CD4-positive, alpha-beta T cell (primary cell): ENCODE measurements at regions of chr14 and their contacts with region 1.

Region 1: GRCh38 chr14:74762917-74763802 is at the start of gene YLPM1:
- DNase-seq: peak; percentile 85 to 98 (median 90)
- ATAC-seq: peak; percentile 89
- H3K4me3 ChIP-seq: peak within 1 kb of the TSS; percentile 84
- H3K4me3 Mint-ChIP-seq: peak within 1 kb of the TSS; percentile 88
- H3K27ac ChIP-seq: peak within 1 kb of the TSS; percentile 91 to 96
- H3K27ac Mint-ChIP-seq: peak within 1 kb of the TSS; percentile 85
- H3K4me1 ChIP-seq: peaks cover 37% of the 10 kb centered on the region
- H3K4me1 Mint-ChIP-seq: peaks cover 50% of the 10 kb centered on the region
- H3K27me3 ChIP-seq: no peaks in the 10 kb centered on the region
- H3K27me3 Mint-ChIP-seq: no peaks in the 10 kb centered on the region
- CTCF ChIP-seq: peak; percentile 54
- total RNA-seq, gene YLPM1: 87.2 to 88.6 TPM

Region 2: DNA sequence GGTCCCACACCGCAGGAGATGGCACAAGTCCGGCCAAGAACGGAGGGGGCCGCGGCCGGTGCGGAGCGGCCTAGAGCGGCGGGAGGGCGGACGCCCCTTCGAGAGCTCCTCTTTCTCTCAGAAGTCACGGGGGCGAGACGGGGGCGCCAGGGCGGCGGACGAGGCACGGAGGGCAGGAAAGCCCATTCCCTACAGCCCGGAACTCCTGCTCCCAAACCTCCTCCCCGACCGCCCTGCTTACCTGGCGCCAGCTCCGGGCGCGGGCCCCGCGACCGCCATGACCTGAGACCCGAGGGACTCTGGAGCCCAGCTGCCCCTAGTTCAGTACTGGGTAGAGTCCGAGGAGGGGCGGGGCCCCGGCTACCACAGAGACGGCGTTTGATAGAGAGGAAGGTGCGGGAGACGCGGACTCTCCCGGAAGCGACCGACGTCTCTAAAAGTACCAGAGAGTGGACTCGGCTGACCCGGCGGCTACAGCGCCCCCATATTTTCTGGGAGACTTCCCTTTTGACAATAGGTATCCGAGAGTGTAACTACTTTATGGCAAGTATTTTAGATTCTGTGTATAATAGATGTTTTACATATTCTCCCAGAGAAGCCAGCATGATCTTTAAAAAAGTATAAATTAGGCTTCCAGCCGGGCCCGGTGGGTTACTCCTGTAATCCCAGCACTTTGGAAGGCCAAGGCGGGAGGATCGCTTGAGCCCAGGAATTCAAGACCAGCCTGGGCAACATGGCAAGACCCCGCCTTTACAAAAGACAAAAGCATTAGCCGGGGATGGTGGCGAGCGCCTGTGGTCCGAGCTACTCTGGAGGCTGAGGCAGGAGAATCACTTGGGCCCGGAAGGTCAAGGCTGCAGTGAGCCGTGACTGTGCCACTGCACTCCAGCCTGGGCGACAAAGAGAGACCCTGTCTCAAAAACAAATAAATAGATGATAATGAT is 460.3 kb before region 1 on chr14 and contains the start of gene ABCD4:
- CTCF ChIA-PET with region 1: no interaction called
- POLR2A ChIA-PET with region 1: no interaction called
- intact Hi-C with region 1: loop called in 1 of 2 experiments (anchors 5 kb)
- DNase-seq: peak; percentile 68 to 91 (median 81)
- ATAC-seq: peak; percentile 70
- H3K4me3 ChIP-seq: peak within 1 kb of the TSS; percentile 96
- H3K4me3 Mint-ChIP-seq: peak within 1 kb of the TSS; percentile 97
- H3K27ac ChIP-seq: peak within 1 kb of the TSS; percentile 75 to 86
- H3K27ac Mint-ChIP-seq: peak within 1 kb of the TSS; percentile 87
- H3K4me1 ChIP-seq: peaks cover 33% of the 10 kb centered on the region
- H3K4me1 Mint-ChIP-seq: peaks cover 27% of the 10 kb centered on the region
- H3K27me3 ChIP-seq: no peaks in the 10 kb centered on the region
- H3K27me3 Mint-ChIP-seq: no peaks in the 10 kb centered on the region
- CTCF ChIP-seq: peak; percentile 53
- total RNA-seq, gene ABCD4: 59.6 to 63.0 TPM

Region 3: DNA sequence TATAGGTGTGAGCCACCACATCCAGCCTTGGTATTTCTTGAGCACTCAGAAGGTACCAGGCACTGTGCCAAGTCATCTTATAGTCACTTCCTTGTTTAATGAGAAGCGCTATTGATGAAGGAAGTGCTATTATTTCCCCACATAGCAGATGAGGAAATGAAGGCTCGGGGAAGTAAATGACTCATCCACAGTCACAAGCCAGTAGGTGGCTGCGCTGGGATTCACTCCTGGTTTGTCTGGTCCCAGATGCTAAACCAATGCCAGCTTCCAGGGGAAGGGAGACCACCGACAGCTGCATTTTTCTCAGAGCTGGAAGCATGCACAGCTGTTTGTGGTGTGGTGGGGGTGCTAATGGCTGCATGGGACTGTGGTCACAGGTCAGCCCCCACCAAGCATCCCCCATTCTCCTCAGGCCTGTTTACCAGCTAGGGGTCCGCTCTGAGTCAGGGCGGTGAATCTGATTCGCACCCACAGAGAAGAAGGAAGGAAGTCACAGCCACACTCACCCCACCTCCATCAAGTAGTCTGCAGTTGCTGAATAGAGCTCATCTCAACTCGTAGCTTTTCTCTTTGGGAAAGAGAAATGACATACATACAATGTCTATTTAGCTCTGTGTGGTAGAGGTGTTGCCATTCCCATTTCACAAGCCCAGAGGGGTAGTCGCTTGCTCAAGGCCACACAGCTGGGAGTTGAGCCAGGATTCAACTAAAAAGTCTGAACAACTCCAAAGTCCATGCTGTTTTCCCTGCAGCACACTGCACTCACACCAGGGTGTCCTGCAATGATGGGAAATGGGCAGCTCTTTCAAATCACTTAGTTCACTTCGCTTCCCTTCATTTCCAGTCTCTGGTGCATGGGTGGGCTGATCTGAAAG is 144.8 kb before region 1 on chr14:
- CTCF ChIA-PET with region 1: interaction called, 12 read pairs
- POLR2A ChIA-PET with region 1: interaction called, 19 read pairs
- intact Hi-C with region 1: no loop called
- DNase-seq: peak; percentile 24 to 89 (median 54)
- ATAC-seq: peak; percentile 82
- H3K4me3 ChIP-seq: peak overlapping the region; percentile 43
- H3K4me3 Mint-ChIP-seq: peak overlapping the region; percentile 78
- H3K27ac ChIP-seq: peak overlapping the region; percentile 62 to 76
- H3K27ac Mint-ChIP-seq: peak overlapping the region; percentile 95
- H3K4me1 ChIP-seq: peaks cover 62% of the 10 kb centered on the region
- H3K4me1 Mint-ChIP-seq: peaks cover 48% of the 10 kb centered on the region
- H3K27me3 ChIP-seq: no peaks in the 10 kb centered on the region
- H3K27me3 Mint-ChIP-seq: peaks cover 7% of the 10 kb centered on the region
- CTCF ChIP-seq: no peak

Region 4: DNA sequence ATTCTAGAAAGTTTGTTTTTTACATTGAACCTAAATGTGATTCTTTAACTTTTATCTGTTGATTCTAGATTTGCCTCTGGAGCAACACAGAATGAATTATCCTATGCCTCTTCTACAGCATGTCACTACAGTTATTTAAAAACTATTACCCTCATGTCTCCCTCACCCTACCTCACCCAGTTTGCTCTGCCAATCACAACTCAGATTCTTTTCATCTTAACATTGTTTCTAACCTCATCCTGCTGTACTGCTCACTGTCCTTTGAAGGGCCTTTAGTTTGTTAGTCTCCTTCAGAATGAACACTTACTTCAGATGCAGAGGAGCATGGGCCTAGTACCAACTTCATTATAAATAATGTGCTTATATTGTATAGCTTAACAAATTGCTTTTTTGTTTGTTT is 21.5 kb after region 1 on chr14:
- CTCF ChIA-PET with region 1: interaction called, 6 read pairs
- POLR2A ChIA-PET with region 1: interaction called, 17 read pairs
- intact Hi-C with region 1: no loop called
- DNase-seq: peak in 2 of 14 experiments; percentile 22 to 28
- ATAC-seq: peak; percentile 93
- H3K4me3 ChIP-seq: no peak overlapping the region
- H3K4me3 Mint-ChIP-seq: no peak overlapping the region
- H3K27ac ChIP-seq: no peak overlapping the region
- H3K27ac Mint-ChIP-seq: peak overlapping the region; percentile 21
- H3K4me1 ChIP-seq: peaks cover 3% of the 10 kb centered on the region
- H3K4me1 Mint-ChIP-seq: peaks cover 31% of the 10 kb centered on the region
- H3K27me3 ChIP-seq: no peaks in the 10 kb centered on the region
- H3K27me3 Mint-ChIP-seq: no peaks in the 10 kb centered on the region
- CTCF ChIP-seq: no peak

Region 5: GRCh38 chr14:74838166-74838565 is 75.0 kb after region 1 on chr14:
- CTCF ChIA-PET with region 1: no interaction called
- POLR2A ChIA-PET with region 1: interaction called, 16 read pairs
- intact Hi-C with region 1: loop called in 1 of 2 experiments (anchors 10 kb)
- DNase-seq: peak in 3 of 14 experiments; percentile 57 to 79 (median 59)
- ATAC-seq: peak; percentile 76
- H3K4me3 ChIP-seq: peak overlapping the region; percentile 8
- H3K4me3 Mint-ChIP-seq: peak overlapping the region; percentile 86
- H3K27ac ChIP-seq: peak overlapping the region; percentile 67 to 88
- H3K27ac Mint-ChIP-seq: peak overlapping the region; percentile 97
- H3K4me1 ChIP-seq: peaks cover 30% of the 10 kb centered on the region
- H3K4me1 Mint-ChIP-seq: peaks cover 87% of the 10 kb centered on the region
- H3K27me3 ChIP-seq: no peaks in the 10 kb centered on the region
- H3K27me3 Mint-ChIP-seq: no peaks in the 10 kb centered on the region
- CTCF ChIP-seq: no peak

Region 6: DNA sequence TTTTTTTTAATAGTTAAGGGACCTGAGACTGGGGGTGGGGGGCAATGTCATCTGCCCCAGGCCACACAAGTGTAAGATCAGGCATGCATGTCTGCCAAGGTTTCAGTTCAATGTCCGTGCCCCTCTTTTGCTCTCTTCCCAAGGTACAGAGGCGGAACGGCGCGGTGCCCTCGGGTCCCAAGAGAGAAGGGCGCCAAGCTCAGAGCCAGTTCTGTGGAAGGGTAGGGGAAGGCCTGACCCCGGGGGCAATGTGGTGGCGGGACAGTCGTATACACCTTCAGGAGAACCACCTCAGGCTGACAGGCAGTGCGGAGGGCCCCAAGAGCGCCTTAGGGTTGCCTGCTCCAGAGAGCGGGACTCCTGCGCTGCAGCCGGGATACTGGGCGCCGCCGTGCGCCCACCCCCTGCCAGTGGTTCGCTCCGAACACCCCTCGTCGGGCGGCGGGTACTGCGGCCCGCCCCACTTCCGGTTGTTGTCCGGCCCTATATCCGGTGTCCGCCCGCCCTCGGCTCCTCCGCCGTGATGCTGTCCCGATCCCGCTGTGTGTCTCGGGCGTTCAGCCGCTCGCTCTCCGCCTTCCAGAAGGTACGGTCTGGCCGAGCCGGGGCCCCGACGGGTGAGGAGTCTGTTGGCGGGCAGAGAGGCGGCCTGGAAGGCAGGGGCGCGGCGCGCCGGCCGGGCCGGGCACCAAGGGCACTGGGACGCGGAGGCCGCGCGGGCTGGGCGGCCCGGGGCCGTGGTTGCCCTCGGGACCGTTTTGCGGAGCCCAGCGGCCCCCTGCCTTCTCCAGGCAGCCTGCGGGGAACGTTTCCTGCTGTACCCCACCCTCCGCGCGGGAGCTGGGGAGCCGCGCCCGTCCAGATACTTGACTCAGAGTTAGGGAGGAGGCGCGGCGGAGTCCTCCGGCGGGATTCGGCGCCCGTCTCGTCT is 118.5 kb after region 1 on chr14 and contains the start of gene DLST:
- CTCF ChIA-PET with region 1: interaction called, 6 read pairs
- POLR2A ChIA-PET with region 1: interaction called, 14 read pairs
- intact Hi-C with region 1: loop called in 1 of 2 experiments (anchors 5 kb)
- DNase-seq: peak; percentile 70 to 92 (median 80)
- ATAC-seq: peak; percentile 63
- H3K4me3 ChIP-seq: peak within 1 kb of the TSS; percentile 95
- H3K4me3 Mint-ChIP-seq: peak within 1 kb of the TSS; percentile 99
- H3K27ac ChIP-seq: peak within 1 kb of the TSS; percentile 82 to 88
- H3K27ac Mint-ChIP-seq: peak within 1 kb of the TSS; percentile 92
- H3K4me1 ChIP-seq: peaks cover 53% of the 10 kb centered on the region
- H3K4me1 Mint-ChIP-seq: peaks cover 70% of the 10 kb centered on the region
- H3K27me3 ChIP-seq: no peaks in the 10 kb centered on the region
- H3K27me3 Mint-ChIP-seq: no peaks in the 10 kb centered on the region
- CTCF ChIP-seq: no peak
- total RNA-seq, gene DLST: 162 to 170 TPM

Region 7: GRCh38 chr14:75088574-75089373 is 325.6 kb after region 1 on chr14:
- CTCF ChIA-PET with region 1: no interaction called
- POLR2A ChIA-PET with region 1: no interaction called
- intact Hi-C with region 1: no loop called
- DNase-seq: peak in 10 of 14 experiments; percentile 8 to 71 (median 31)
- ATAC-seq: peak; percentile 72
- H3K4me3 ChIP-seq: no peak overlapping the region
- H3K4me3 Mint-ChIP-seq: no peak overlapping the region
- H3K27ac ChIP-seq: no peak overlapping the region
- H3K27ac Mint-ChIP-seq: no peak overlapping the region
- H3K4me1 ChIP-seq: no peaks in the 10 kb centered on the region
- H3K4me1 Mint-ChIP-seq: no peaks in the 10 kb centered on the region
- H3K27me3 ChIP-seq: no peaks in the 10 kb centered on the region
- H3K27me3 Mint-ChIP-seq: no peaks in the 10 kb centered on the region
- CTCF ChIP-seq: peak; percentile 84

Region 8: DNA sequence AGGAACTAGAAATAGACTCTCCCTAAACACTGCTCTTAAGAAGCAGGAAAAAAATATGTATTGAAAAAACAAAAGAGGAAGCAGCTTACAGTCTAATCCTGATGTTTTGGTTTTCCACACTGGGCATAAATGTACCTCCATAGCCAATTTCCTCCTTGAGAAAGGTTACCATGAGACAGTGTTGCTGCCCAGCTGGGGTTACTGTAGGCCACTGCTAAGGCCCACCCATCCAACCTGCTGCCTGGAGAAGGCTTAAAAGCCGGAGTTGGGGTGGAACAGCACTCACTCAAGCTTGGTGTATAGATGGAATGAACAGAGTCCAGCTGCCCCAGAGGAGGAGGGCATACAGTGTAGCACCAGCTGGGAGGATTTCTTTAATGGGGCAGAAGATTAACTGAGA is 856.4 kb after region 1 on chr14:
- CTCF ChIA-PET with region 1: no interaction called
- POLR2A ChIA-PET with region 1: no interaction called
- intact Hi-C with region 1: no loop called
- DNase-seq: no peak
- ATAC-seq: no peak
- H3K4me3 ChIP-seq: no peak overlapping the region
- H3K4me3 Mint-ChIP-seq: no peak overlapping the region
- H3K27ac ChIP-seq: no peak overlapping the region
- H3K27ac Mint-ChIP-seq: no peak overlapping the region
- H3K4me1 ChIP-seq: no peaks in the 10 kb centered on the region
- H3K4me1 Mint-ChIP-seq: no peaks in the 10 kb centered on the region
- H3K27me3 ChIP-seq: no peaks in the 10 kb centered on the region
- H3K27me3 Mint-ChIP-seq: no peaks in the 10 kb centered on the region
- CTCF ChIP-seq: no peak